ENCODE measurements at regions of chr14 and their contacts with region 1.

Region 1: DNA sequence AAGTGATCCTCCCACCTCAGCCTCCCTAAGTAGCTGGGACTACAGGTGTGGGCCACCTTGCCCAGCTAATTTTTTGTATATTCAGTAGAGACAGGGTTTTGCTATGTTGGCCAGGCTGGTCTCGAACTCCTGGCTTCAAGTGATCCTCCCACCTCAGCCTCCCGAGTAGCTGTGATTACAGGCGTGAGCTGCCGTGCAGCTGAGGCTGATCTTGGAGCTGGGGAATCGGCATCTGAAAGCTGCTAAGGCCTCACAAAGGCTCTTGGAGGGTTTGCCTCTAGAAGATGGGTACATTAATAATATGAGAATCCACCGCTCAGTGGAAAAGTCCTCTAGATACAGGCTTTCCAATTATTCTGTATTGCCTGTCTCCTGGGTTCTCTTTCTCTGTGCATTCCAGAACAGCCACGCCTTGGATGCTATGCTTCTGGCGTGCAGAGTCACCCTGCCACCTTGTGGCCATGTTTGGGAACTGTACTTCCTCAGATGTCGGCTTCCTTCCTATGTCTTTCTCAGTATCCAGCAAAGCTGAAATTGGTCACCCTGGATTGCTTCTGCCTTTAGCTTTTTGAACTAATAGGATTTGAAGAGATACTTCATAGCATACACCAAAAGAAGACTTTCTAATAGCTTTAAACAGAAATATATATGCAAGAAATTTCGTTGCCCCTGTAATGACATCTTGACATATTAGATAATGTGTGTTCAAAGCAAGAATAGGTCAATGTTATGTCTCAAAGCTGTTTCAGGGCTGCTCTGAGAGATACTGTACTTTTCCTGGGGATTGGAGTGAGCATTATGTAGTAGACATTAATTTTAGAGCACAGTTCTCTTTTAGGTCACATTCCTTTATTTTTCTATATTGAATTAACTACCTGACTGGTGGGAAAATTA is 75.4 kb downstream of the SNAPC1 start:
- DNase-seq: peak; percentile 83
- ATAC-seq: peak; percentile 97
- H3K4me3 Mint-ChIP-seq: no peak overlapping the region
- H3K27ac Mint-ChIP-seq: no peak overlapping the region
- H3K4me1 Mint-ChIP-seq: peaks cover 5% of the 10 kb centered on the region
- H3K27me3 Mint-ChIP-seq: peaks cover 33% of the 10 kb centered on the region

Region 2: DNA sequence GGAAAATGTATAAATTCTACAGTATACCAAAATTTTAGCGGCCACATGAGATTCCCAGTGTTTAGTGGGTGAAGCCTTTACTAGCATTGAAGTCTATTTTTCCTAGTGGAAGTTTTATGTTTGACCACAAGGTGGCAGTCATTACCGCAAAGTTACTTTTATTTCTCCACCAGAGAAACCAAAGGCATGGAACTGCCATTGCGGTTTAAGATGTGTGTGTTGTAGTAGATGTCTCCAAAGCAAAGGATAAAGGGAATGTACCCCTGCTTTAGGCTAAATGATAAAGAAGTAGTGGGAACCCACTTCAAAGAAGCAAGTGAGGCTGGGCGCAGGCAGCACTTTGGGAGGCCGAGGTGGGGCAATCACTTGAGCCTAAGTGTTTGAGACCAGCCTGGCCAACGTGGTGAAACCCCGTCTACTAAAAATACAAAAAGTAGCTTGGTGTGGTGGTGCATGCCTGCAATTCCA is 375.7 kb before region 1 on chr14:
- CTCF ChIA-PET with region 1: interaction called, 13 read pairs
- DNase-seq: no peak
- ATAC-seq: peak; percentile 40
- H3K4me3 Mint-ChIP-seq: no peak overlapping the region
- H3K27ac Mint-ChIP-seq: peak overlapping the region; percentile 87
- H3K4me1 Mint-ChIP-seq: peaks cover 67% of the 10 kb centered on the region
- H3K27me3 Mint-ChIP-seq: no peaks in the 10 kb centered on the region

Region 3: DNA sequence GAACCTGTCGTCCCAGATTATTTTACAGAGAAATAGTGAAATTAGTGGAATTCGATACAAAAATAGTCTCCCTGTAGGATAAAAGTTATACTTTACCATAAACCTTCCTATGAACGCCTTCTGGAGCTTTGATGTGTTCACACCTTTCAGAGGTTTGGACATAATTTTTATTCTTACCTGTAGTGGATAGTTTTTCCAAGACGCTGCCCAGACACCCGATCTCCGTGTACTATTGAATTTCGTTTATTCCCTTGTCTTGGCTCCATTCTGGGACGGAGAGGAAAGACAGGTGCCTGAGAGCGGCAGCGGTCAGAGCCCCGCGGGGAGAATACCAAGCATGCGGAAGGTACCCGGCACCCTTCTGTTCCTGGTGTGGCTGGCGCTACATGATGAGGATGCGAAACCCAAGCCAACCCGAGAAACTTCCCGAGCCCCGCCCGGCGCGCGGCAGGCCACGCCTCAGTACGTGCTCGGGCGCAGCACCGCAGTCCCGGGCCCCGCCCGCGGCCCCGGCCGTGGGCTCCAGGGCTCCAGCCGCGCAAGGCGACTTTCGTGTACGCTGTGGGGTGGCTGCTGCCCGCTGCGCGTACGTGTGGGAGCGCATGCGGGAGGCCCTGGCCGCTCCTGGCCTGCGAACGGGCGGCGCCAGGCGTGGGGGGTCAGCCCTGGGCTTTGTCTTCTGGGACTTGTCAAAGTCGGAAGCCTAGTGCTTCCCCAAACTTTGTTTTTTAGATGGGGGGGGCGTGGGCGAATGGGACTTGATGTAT is 86.7 kb before region 1 on chr14:
- CTCF ChIA-PET with region 1: interaction called, 18 read pairs
- DNase-seq: peak; percentile 91
- ATAC-seq: peak; percentile 97
- H3K4me3 Mint-ChIP-seq: peak overlapping the region; percentile 97
- H3K27ac Mint-ChIP-seq: peak overlapping the region; percentile 83
- H3K4me1 Mint-ChIP-seq: peaks cover 38% of the 10 kb centered on the region
- H3K27me3 Mint-ChIP-seq: peaks cover 6% of the 10 kb centered on the region

Region 4: DNA sequence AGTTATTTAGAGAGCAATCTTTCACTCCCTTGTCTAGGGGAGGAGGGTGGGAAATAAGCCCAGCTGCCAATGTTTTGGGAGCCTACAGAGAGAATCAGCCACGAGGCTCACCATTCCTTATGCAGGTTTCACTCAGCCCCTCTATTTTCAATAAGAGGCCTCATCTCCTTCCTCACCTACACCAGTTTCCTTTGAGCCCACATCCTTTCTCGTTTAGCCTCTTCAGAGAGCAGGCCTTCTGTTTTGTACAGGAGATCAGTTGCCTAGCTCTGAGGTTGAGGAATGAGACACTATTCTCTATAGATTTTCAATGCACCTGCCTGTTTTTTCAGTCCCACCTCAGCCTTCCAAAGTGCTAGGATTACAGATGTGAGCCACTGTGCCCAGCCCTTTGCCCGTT is 57.5 kb before region 1 on chr14:
- CTCF ChIA-PET with region 1: interaction called, 10 read pairs
- DNase-seq: peak; percentile 55
- ATAC-seq: peak; percentile 96
- H3K4me3 Mint-ChIP-seq: peak overlapping the region; percentile 14
- H3K27ac Mint-ChIP-seq: peak overlapping the region; percentile 87
- H3K4me1 Mint-ChIP-seq: peaks cover 25% of the 10 kb centered on the region
- H3K27me3 Mint-ChIP-seq: no peaks in the 10 kb centered on the region

Region 5: GRCh38 chr14:61898568-61898967 is 61.0 kb after region 1 on chr14:
- CTCF ChIA-PET with region 1: no interaction called
- DNase-seq: no peak
- ATAC-seq: no peak
- H3K4me3 Mint-ChIP-seq: no peak overlapping the region
- H3K27ac Mint-ChIP-seq: no peak overlapping the region
- H3K4me1 Mint-ChIP-seq: no peaks in the 10 kb centered on the region
- H3K27me3 Mint-ChIP-seq: peaks cover 17% of the 10 kb centered on the region

Region 6: DNA sequence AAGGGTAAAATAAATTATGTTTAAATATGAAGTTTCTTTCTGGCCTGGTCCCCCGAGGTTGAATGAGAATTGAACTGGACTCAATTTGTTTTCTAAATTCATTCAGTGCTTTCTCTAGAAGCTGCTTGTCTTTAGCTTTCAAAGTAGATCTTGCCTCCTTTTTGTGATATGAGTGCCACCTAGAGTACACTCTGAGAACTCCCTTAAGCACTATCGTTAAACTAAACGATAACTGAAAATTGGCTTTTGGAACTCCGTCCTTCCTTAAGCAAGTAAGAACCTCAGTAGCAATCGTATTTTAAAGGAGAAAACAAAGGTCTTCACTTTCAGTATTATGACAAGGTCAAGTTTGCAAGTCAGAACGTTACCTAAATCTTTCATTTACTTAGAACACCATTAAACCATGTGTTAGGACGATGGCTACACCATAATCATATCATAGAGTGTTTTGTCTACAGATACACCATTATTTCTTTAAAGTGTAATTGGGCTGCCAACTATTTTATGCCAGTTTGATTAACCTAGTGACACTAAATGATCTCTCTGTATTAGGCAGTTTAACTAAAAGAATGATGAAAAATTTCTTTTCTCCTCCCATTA is 289.4 kb after region 1 on chr14:
- CTCF ChIA-PET with region 1: interaction called, 17 read pairs
- DNase-seq: no peak
- ATAC-seq: no peak
- H3K4me3 Mint-ChIP-seq: no peak overlapping the region
- H3K27ac Mint-ChIP-seq: no peak overlapping the region
- H3K4me1 Mint-ChIP-seq: no peaks in the 10 kb centered on the region
- H3K27me3 Mint-ChIP-seq: peaks cover 71% of the 10 kb centered on the region

Measured in activated CD8-positive, alpha-beta memory T cell treated with anti-CD3 and anti-CD28 coated beads, Interleukin-2, amount 10 ng/mL, durations not matched to agents 7 days and 5 days (primary cell).